ENCODE measurements at regions of chr11 and their contacts with region 1.

Region 1: GRCh38 chr11:18540207-18541009 is 13.7 kb upstream of the TSG101 start:
- DNase-seq: peak; percentile 4
- H3K4me3 ChIP-seq: no peak overlapping the region
- H3K27ac ChIP-seq: no peak overlapping the region
- H3K4me1 ChIP-seq: no peaks in the 10 kb centered on the region
- H3K27me3 ChIP-seq: no peaks in the 10 kb centered on the region
- CTCF ChIP-seq: peak; percentile 50; the same call in 1 of the 2 replicates

Region 2: GRCh38 chr11:18650859-18651557 is 110.6 kb after region 1 on chr11:
- CTCF ChIA-PET with region 1: no interaction called
- POLR2A ChIA-PET with region 1: no interaction called
- intact Hi-C with region 1: loop called (anchors 2 kb)
- DNase-seq: peak; percentile 80
- H3K4me3 ChIP-seq: no peak overlapping the region
- H3K27ac ChIP-seq: no peak overlapping the region
- H3K4me1 ChIP-seq: no peaks in the 10 kb centered on the region
- H3K27me3 ChIP-seq: no peaks in the 10 kb centered on the region
- CTCF ChIP-seq: peak; percentile 67

Region 3: DNA sequence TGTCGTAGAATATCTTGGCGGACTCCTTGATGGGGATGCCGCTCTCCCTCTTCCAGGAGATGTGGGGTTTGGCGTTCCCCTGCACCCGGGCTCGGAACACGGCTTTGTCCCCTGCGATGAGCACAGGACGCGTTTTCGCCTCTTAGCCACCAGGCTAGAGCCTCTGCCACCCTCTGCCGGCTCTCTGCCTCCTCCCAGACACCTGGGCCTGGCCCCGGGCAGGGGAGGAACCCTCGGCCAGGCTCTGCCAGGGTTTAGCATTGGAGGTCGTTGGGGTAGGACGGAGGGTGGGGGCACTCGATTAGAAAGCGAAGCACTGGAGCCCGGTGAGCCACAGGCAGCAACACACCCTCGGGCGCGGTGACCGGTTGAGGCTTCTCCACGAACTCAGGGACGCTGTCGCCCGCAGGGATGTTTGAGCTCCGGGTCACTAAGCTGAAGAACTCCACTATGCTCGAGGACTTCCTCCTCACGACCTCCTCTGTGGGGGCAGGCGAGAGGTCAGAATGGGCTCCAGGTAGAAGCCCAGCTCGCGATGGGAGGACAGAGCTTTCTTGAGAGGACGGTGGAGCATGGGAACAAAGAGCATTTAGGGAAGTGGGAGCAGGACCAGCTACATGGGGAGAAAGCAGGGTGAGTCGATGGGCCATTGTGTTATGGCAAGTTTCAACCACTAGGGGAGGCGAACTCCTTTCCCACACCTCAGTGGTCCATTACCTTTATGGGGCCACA is 181.3 kb after region 1 on chr11:
- CTCF ChIA-PET with region 1: no interaction called
- POLR2A ChIA-PET with region 1: no interaction called
- intact Hi-C with region 1: loop called (anchors 10 kb)
- DNase-seq: peak; percentile 35
- H3K4me3 ChIP-seq: peak overlapping the region; percentile 53
- H3K27ac ChIP-seq: no peak overlapping the region
- H3K4me1 ChIP-seq: peaks cover 3% of the 10 kb centered on the region
- H3K27me3 ChIP-seq: no peaks in the 10 kb centered on the region
- CTCF ChIP-seq: peak; percentile 64